Left cardiac atrium (tissue), 4 donors: ENCODE measurements at regions of chr11 and their contacts with region 1.

Region 1: DNA sequence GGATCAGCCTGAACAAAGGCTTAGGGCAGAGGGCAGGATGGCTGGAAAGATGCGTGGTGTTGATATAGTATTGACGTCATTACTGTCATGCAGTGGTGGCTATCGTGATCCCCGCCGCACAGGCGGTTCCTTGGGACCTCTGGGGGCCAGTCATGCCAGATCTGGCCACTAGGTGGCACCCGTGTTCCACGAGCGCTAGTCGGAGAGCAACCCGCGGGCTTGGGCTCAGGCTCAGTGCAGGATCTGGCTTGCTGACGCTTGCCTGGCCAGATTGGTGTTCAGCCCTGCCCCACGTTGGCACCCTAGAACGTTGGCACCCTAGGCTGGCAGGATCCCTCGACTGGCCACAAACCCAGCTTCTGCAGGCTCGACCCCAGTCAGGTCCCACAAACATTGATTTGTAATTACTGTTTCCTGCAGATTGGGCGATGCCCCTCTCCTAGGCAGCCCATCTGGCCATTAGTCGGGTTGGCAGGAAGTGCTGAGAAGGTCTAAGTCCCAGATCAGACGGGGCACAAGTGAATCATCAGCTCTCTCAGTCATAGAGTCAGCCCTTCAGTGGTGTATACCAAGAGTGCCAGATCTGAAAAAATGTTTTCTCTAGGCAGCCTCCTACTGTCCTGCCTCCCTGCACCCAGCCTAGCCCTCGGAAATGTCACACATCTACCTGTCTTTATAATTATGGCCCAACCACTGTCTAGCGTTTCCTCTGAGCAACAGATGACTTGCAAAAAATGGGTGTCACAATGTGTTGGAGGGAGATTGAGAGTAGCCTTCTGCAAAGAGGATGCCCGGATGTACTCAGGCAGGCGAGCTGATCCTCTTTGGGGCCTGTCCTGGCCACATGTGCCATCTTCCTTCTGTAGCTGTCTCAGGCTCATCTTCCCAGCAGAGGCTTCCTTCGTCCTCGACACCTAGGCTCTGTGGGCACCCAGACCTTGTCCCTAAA is 315.3 kb downstream of the TMEM135 start:
- DNase-seq: peak; percentile 87
- ATAC-seq: peak; percentile 92 to 95

Region 2: GRCh38 chr11:87421422-87421821 is 68.4 kb after region 1 on chr11:
- intact Hi-C with region 1: loop called (anchors 1 to 2 kb)
- DNase-seq: no peak
- ATAC-seq: peak; percentile 83 to 86